GM12878 (cell line): ENCODE measurements at regions of chr4 and their contacts with region 1.

Region 1: GRCh38 chr4:155353923-155354540 is 22.7 kb downstream of the MAP9 start:
- DNase-seq: no peak
- ATAC-seq: peak; percentile 93
- H3K4me3 ChIP-seq: no peak overlapping the region
- H3K27ac ChIP-seq: no peak overlapping the region
- H3K4me1 ChIP-seq: no peaks in the 10 kb centered on the region
- H3K27me3 ChIP-seq: no peaks in the 10 kb centered on the region
- CTCF ChIP-seq: peak; percentile 49 to 70 (median 65); a peak in 5 of 6 replicates
- EP300 ChIP-seq: no peak
- POLR2A ChIP-seq: no peak
- RAD21 ChIP-seq: peak; percentile 63

Region 2: GRCh38 chr4:154559494-154560418 is 794.3 kb before region 1 on chr4:
- CTCF ChIA-PET with region 1: no interaction called
- POLR2A ChIA-PET with region 1: no interaction called
- RAD21 ChIA-PET with region 1: no interaction called
- SMC1A ChIA-PET with region 1: no interaction called
- in situ Hi-C with region 1: no loop called
- intact Hi-C with region 1: loop called (anchors 5 kb)
- DNase-seq: no peak
- ATAC-seq: peak; percentile 95
- H3K4me3 ChIP-seq: no peak overlapping the region
- H3K27ac ChIP-seq: no peak overlapping the region
- H3K4me1 ChIP-seq: no peaks in the 10 kb centered on the region
- H3K27me3 ChIP-seq: no peaks in the 10 kb centered on the region
- CTCF ChIP-seq: peak; percentile 48 to 83 (median 53)
- EP300 ChIP-seq: no peak
- POLR2A ChIP-seq: no peak
- RAD21 ChIP-seq: peak; percentile 90

Region 3: DNA sequence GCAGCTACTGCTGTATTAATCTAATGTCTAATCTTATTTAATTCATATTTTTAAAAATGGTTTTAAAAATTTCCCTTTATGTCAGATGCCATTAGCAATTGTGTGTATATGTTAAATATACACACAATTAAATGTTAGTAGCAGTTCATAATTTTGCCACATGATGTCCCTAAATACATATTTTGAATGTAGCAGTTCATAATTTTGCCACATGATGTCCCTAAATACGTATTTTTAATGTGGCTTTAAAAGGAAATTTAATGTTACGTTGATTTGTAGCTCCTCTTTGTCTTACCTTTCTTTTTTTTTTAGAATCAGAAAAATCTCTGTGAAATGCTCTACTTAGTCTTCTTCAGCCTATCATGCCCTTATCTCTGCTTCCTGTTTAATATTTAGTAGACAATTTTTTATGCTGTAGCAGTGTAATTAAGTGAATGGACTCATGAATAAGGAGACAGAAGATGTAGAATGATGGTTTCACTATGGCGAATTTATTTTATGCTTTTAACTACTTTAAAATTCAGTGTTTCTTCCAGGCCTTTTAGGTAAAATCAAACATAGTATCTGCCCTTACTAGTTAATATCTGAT is 546.9 kb before region 1 on chr4:
- CTCF ChIA-PET with region 1: interaction called, 7 read pairs
- POLR2A ChIA-PET with region 1: no interaction called
- RAD21 ChIA-PET with region 1: no interaction called
- SMC1A ChIA-PET with region 1: no interaction called
- in situ Hi-C with region 1: no loop called
- intact Hi-C with region 1: loop called (anchors 5 kb)
- DNase-seq: peak; percentile 2
- ATAC-seq: peak; percentile 51; the same call in 2 of the 3 replicates
- H3K4me3 ChIP-seq: no peak overlapping the region
- H3K27ac ChIP-seq: no peak overlapping the region
- H3K4me1 ChIP-seq: no peaks in the 10 kb centered on the region
- H3K27me3 ChIP-seq: no peaks in the 10 kb centered on the region
- CTCF ChIP-seq: peak; percentile 37 to 76 (median 66); a peak in 5 of 6 replicates
- EP300 ChIP-seq: no peak
- POLR2A ChIP-seq: no peak
- RAD21 ChIP-seq: peak; percentile 55

Region 4: GRCh38 chr4:154982187-154983047 is 371.6 kb before region 1 on chr4:
- CTCF ChIA-PET with region 1: interaction called, 5 read pairs
- POLR2A ChIA-PET with region 1: no interaction called
- RAD21 ChIA-PET with region 1: interaction called, 3 read pairs
- SMC1A ChIA-PET with region 1: interaction called, 3 read pairs
- in situ Hi-C with region 1: no loop called
- intact Hi-C with region 1: loop called (anchors 1 kb)
- DNase-seq: peak; percentile 15
- ATAC-seq: peak; percentile 86
- H3K4me3 ChIP-seq: no peak overlapping the region
- H3K27ac ChIP-seq: no peak overlapping the region
- H3K4me1 ChIP-seq: no peaks in the 10 kb centered on the region
- H3K27me3 ChIP-seq: no peaks in the 10 kb centered on the region
- CTCF ChIP-seq: peak; percentile 72 to 73 (median 72)
- EP300 ChIP-seq: no peak
- POLR2A ChIP-seq: no peak
- RAD21 ChIP-seq: peak; percentile 71

Region 5: DNA sequence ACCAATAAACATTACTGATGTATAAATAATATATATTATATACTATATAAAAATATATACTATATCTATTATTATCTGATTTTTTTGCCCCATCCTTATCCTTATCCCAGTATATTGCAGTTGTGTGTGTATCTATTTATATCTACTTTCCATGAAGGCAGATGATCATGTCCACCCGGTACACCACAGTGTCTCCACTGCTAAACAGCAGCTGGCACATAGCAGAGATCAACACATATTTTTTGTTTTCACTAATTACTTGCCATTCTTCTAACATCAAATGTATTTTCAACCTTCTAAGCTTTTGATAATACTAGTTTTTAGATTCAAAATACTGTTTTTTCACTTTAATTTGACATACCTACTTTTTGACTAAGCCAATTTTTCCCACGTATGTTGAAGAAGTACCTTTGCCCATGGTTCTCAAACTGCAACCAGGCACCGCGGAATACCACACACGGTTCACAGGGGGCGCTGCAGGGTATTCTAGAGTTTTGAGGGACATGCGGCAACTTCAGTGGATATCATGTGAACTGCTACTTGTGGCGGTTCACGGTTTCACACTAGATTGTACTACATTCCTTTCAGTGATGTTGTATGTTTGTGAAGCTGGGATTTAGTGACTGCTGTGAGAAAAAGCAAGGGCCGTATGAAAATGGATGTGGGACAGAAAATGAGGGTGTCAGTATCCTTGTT is 328.1 kb before region 1 on chr4:
- CTCF ChIA-PET with region 1: interaction called, 6 read pairs
- POLR2A ChIA-PET with region 1: no interaction called
- RAD21 ChIA-PET with region 1: interaction called, 3 read pairs
- SMC1A ChIA-PET with region 1: no interaction called
- in situ Hi-C with region 1: no loop called
- intact Hi-C with region 1: loop called (anchors 2 kb)
- DNase-seq: no peak
- ATAC-seq: peak; percentile 95
- H3K4me3 ChIP-seq: no peak overlapping the region
- H3K27ac ChIP-seq: no peak overlapping the region
- H3K4me1 ChIP-seq: no peaks in the 10 kb centered on the region
- H3K27me3 ChIP-seq: no peaks in the 10 kb centered on the region; a peak in 1 of 4 replicates
- CTCF ChIP-seq: peak; percentile 58 to 68 (median 58)
- EP300 ChIP-seq: no peak
- POLR2A ChIP-seq: no peak
- RAD21 ChIP-seq: peak; percentile 61

Region 6: DNA sequence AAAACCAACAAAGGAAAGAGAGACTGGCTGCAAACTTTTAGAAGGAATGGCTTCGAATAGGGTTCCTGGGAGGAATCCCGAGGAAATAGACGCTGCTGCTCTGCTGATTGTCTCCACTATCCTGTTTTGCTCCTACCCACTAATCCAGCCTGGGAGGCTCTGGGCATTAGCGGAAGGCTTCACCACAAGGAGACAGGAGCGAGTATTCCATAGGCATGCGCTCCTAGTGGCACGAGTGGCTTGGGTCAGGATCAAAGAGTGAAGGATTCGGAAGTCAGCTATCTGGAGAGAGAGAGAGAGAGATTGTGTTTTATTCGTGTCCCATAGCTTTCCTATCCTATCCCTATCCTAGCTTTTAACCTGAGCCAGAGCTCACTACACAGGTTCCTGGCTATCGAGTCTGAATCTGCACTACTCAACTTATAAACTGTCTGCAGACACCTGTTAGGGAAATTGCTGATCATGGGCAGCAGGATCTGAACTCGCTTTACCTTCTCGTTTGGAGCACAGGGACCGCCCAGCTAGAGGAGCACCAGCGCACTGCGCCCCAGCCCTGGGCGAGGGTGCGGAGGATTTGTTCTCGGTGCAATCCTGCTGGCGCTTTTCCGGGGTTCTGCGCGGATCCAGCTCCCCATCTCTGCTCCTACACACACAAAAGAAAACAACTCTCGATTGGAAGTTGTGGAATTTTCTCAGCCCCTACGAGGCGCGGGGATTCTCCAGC is 146.3 kb before region 1 on chr4:
- CTCF ChIA-PET with region 1: no interaction called
- POLR2A ChIA-PET with region 1: no interaction called
- RAD21 ChIA-PET with region 1: no interaction called
- SMC1A ChIA-PET with region 1: no interaction called
- in situ Hi-C with region 1: no loop called
- intact Hi-C with region 1: no loop called
- DNase-seq: no peak
- ATAC-seq: no peak
- H3K4me3 ChIP-seq: no peak overlapping the region
- H3K27ac ChIP-seq: no peak overlapping the region
- H3K4me1 ChIP-seq: no peaks in the 10 kb centered on the region
- H3K27me3 ChIP-seq: peaks cover 2 to 17% of the 10 kb centered on the region in 2 experiments; a peak in 3 of 4 replicates
- CTCF ChIP-seq: no peak
- EP300 ChIP-seq: no peak
- POLR2A ChIP-seq: no peak
- RAD21 ChIP-seq: no peak

Region 7: GRCh38 chr4:155604718-155605626 is 250.9 kb after region 1 on chr4:
- CTCF ChIA-PET with region 1: no interaction called
- POLR2A ChIA-PET with region 1: no interaction called
- RAD21 ChIA-PET with region 1: no interaction called
- SMC1A ChIA-PET with region 1: no interaction called
- in situ Hi-C with region 1: no loop called
- intact Hi-C with region 1: no loop called
- DNase-seq: no peak
- ATAC-seq: no peak
- H3K4me3 ChIP-seq: no peak overlapping the region
- H3K27ac ChIP-seq: no peak overlapping the region
- H3K4me1 ChIP-seq: no peaks in the 10 kb centered on the region
- H3K27me3 ChIP-seq: no peaks in the 10 kb centered on the region
- CTCF ChIP-seq: no peak
- EP300 ChIP-seq: no peak
- POLR2A ChIP-seq: no peak
- RAD21 ChIP-seq: no peak